HepG2 (cell line): ENCODE measurements at regions of chr14 and their contacts with region 1.

Region 1: GRCh38 chr14:63044994-63045611 is at the start of gene KCNH5:
- DNase-seq: no peak
- ATAC-seq: peak; percentile 87
- H3K4me3 ChIP-seq: peak within 1 kb of the TSS; percentile 26 to 68 (median 40); a peak in 4 of 6 replicates
- H3K27ac ChIP-seq: no peak within 1 kb of the TSS
- H3K4me1 ChIP-seq: peaks cover 17% of the 10 kb centered on the region
- H3K27me3 ChIP-seq: peaks cover 9 to 26% of the 10 kb centered on the region in 2 experiments; a peak in 4 of 5 replicates
- CTCF ChIP-seq: no peak
- EP300 ChIP-seq: no peak
- POLR2A ChIP-seq: no peak
- RAD21 ChIP-seq: no peak
- total RNA-seq, gene KCNH5: not detected in 2 replicates

Region 2: GRCh38 chr14:63276492-63277342 is 231.6 kb after region 1 on chr14:
- CTCF ChIA-PET with region 1: no interaction called
- POLR2A ChIA-PET with region 1: no interaction called
- in situ Hi-C with region 1: loop called (anchors 10 kb)
- intact Hi-C with region 1: loop called (anchors 10 kb)
- DNase-seq: peak; percentile 17
- ATAC-seq: peak; percentile 62
- H3K4me3 ChIP-seq: no peak overlapping the region
- H3K27ac ChIP-seq: no peak overlapping the region
- H3K4me1 ChIP-seq: no peaks in the 10 kb centered on the region
- H3K27me3 ChIP-seq: no peaks in the 10 kb centered on the region; a peak in 1 of 5 replicates
- CTCF ChIP-seq: peak; percentile 76
- EP300 ChIP-seq: no peak
- POLR2A ChIP-seq: no peak
- RAD21 ChIP-seq: peak; percentile 71

Region 3: GRCh38 chr14:63401646-63402045 is 356.5 kb after region 1 on chr14:
- CTCF ChIA-PET with region 1: no interaction called
- POLR2A ChIA-PET with region 1: no interaction called
- in situ Hi-C with region 1: no loop called
- intact Hi-C with region 1: no loop called
- DNase-seq: no peak
- ATAC-seq: no peak
- H3K4me3 ChIP-seq: no peak overlapping the region
- H3K27ac ChIP-seq: no peak overlapping the region
- H3K4me1 ChIP-seq: peaks cover 5% of the 10 kb centered on the region; the same call in 1 of the 2 replicates
- H3K27me3 ChIP-seq: no peaks in the 10 kb centered on the region
- CTCF ChIP-seq: no peak
- EP300 ChIP-seq: no peak
- POLR2A ChIP-seq: no peak
- RAD21 ChIP-seq: no peak